CD8-positive, alpha-beta T cell (primary cell): ENCODE measurements at regions of chr19 and their contacts with region 1.

Region 1: DNA sequence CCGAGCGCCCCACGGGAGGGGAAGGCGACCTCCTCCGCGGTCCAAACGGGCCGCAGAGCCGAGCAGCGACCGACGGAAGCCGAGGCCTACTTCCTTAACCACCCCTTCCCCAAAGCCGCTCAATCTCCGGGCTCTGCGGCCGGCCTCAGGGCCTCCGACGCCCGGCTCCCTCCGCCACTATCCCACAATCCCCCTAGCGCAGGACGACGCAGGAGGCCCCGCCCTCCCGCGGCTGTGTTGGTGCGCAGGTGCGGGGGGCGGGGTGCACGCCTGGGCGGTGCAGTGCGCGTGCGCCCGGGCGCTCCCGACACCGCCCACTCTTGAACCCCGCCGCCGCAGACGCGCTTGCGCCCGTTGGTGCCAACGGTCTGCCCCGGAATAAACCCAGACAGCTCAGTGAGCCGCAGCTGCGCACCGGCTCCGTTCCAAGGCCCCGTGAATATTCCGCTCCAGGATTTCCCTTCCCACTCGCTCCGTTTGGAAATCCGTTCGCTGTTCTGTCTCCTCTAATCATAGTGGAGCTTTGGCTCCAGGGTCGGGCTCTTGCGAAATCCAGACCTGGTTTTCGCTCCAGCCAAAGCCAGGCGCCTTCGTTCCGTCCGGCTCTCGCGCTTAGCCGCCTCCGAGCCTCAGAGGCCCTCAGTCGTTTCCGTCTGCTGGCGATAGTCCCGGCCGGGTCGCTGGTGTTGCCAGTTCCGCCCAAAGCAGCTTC is at the start of gene PPP6R1:
- DNase-seq: peak; percentile 86 to 98 (median 92)
- ATAC-seq: peak; percentile 81
- H3K4me3 ChIP-seq: peak within 1 kb of the TSS; percentile 80 to 93
- H3K4me3 Mint-ChIP-seq: peak within 1 kb of the TSS; percentile 94
- H3K27ac ChIP-seq: peak within 1 kb of the TSS; percentile 87 to 95
- H3K27ac Mint-ChIP-seq: peak within 1 kb of the TSS; percentile 98
- H3K4me1 ChIP-seq: peaks cover 37% of the 10 kb centered on the region
- H3K4me1 Mint-ChIP-seq: peaks cover 39% of the 10 kb centered on the region
- H3K27me3 ChIP-seq: no peaks in the 10 kb centered on the region
- H3K27me3 Mint-ChIP-seq: no peaks in the 10 kb centered on the region
- CTCF ChIP-seq: no peak
- total RNA-seq, gene PPP6R1: 163 to 172 TPM

Region 2: GRCh38 chr19:55117636-55118391 is 141.2 kb before region 1 on chr19 and contains the start of gene PPP1R12C:
- CTCF ChIA-PET with region 1: interaction called, 3 read pairs
- POLR2A ChIA-PET with region 1: interaction called, 8 read pairs
- intact Hi-C with region 1: loop called (anchors 2 to 10 kb)
- DNase-seq: peak; percentile 89 to 99 (median 97)
- ATAC-seq: peak; percentile 89
- H3K4me3 ChIP-seq: peak within 1 kb of the TSS; percentile 83 to 89
- H3K4me3 Mint-ChIP-seq: peak within 1 kb of the TSS; percentile 97
- H3K27ac ChIP-seq: peak within 1 kb of the TSS; percentile 61 to 84
- H3K27ac Mint-ChIP-seq: peak within 1 kb of the TSS; percentile 93
- H3K4me1 ChIP-seq: peaks cover 19% of the 10 kb centered on the region
- H3K4me1 Mint-ChIP-seq: peaks cover 34% of the 10 kb centered on the region
- H3K27me3 ChIP-seq: no peaks in the 10 kb centered on the region
- H3K27me3 Mint-ChIP-seq: no peaks in the 10 kb centered on the region
- CTCF ChIP-seq: no peak
- total RNA-seq, gene PPP1R12C: 93.8 to 97.6 TPM

Region 3: GRCh38 chr19:55241143-55242088 is 17.6 kb before region 1 on chr19:
- CTCF ChIA-PET with region 1: interaction called, 3 read pairs
- POLR2A ChIA-PET with region 1: interaction called, 5 read pairs
- intact Hi-C with region 1: loop called in 1 of 2 experiments (anchors 1 kb)
- DNase-seq: no peak
- ATAC-seq: no peak
- H3K4me3 ChIP-seq: no peak overlapping the region
- H3K4me3 Mint-ChIP-seq: no peak overlapping the region
- H3K27ac ChIP-seq: no peak overlapping the region
- H3K27ac Mint-ChIP-seq: no peak overlapping the region
- H3K4me1 ChIP-seq: no peaks in the 10 kb centered on the region
- H3K4me1 Mint-ChIP-seq: peaks cover 4% of the 10 kb centered on the region
- H3K27me3 ChIP-seq: no peaks in the 10 kb centered on the region
- H3K27me3 Mint-ChIP-seq: no peaks in the 10 kb centered on the region
- CTCF ChIP-seq: no peak

Region 4: DNA sequence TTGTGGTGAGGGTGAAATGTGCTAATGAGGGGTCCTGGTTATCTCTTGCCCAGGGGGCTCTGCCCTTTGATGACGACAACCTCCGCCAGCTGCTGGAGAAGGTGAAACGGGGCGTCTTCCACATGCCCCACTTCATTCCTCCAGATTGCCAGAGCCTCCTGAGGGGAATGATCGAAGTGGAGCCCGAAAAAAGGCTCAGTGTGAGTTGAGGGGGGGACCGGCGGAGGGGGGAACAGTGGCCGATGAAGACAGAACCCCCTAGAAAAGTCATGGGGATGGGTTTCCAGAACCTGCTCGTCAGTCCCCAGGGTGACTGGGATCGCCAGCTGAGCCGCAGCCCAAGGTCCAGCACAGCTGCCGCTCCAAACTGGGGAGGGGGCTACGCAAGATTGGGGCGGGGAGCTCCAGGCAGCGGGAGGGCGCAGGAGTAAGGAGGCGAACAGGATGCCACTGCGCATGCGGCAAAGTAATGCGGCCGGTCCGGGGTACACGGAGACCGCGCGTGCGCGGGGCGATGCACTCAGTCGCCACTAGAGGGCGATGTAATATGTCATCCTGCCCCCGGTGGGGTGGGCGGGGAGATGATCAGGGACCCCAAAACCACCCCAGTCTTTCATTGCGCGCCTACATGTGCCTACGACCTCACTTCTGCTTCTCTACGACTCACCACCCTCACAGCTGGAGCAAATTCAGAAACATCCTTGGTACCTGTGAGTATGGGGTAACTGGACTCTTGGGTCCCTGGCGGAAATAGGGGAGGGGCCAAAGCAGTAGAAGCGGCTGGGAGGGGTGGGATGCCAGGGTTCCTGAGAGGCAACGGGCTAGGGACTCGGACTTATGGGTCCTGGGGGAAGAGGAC is 42.7 kb after region 1 on chr19:
- CTCF ChIA-PET with region 1: interaction called, 18 read pairs
- POLR2A ChIA-PET with region 1: interaction called, 11 read pairs
- intact Hi-C with region 1: loop called in 1 of 2 experiments (anchors 1 kb)
- DNase-seq: peak; percentile 89 to 99 (median 94)
- ATAC-seq: peak; percentile 88
- H3K4me3 ChIP-seq: peak overlapping the region; percentile 46 to 83
- H3K4me3 Mint-ChIP-seq: peak overlapping the region; percentile 85
- H3K27ac ChIP-seq: peak overlapping the region; percentile 48 to 54
- H3K27ac Mint-ChIP-seq: peak overlapping the region; percentile 92
- H3K4me1 ChIP-seq: peaks cover 11% of the 10 kb centered on the region
- H3K4me1 Mint-ChIP-seq: peaks cover 12% of the 10 kb centered on the region
- H3K27me3 ChIP-seq: no peaks in the 10 kb centered on the region
- H3K27me3 Mint-ChIP-seq: no peaks in the 10 kb centered on the region
- CTCF ChIP-seq: peak; percentile 89

Region 5: GRCh38 chr19:55407800-55408532 is 149.0 kb after region 1 on chr19:
- CTCF ChIA-PET with region 1: no interaction called
- POLR2A ChIA-PET with region 1: interaction called, 13 read pairs
- intact Hi-C with region 1: loop called (anchors 2 kb)
- DNase-seq: peak; percentile 94 to 100 (median 96)
- ATAC-seq: peak; percentile 88
- H3K4me3 ChIP-seq: peak overlapping the region; percentile 64 to 70
- H3K4me3 Mint-ChIP-seq: peak overlapping the region; percentile 95
- H3K27ac ChIP-seq: peak overlapping the region; percentile 98 to 99
- H3K27ac Mint-ChIP-seq: peak overlapping the region; percentile 99
- H3K4me1 ChIP-seq: peaks cover 21% of the 10 kb centered on the region
- H3K4me1 Mint-ChIP-seq: peaks cover 27% of the 10 kb centered on the region
- H3K27me3 ChIP-seq: no peaks in the 10 kb centered on the region
- H3K27me3 Mint-ChIP-seq: no peaks in the 10 kb centered on the region
- CTCF ChIP-seq: no peak

Region 6: GRCh38 chr19:55599468-55600279 is 340.7 kb after region 1 on chr19 and contains the start of gene FIZ1:
- CTCF ChIA-PET with region 1: no interaction called
- POLR2A ChIA-PET with region 1: interaction called, 3 read pairs
- intact Hi-C with region 1: loop called (anchors 2 kb)
- DNase-seq: peak; percentile 90 to 98 (median 95)
- ATAC-seq: peak; percentile 69
- H3K4me3 ChIP-seq: peak within 1 kb of the TSS; percentile 80 to 81
- H3K4me3 Mint-ChIP-seq: peak within 1 kb of the TSS; percentile 100
- H3K27ac ChIP-seq: peak within 1 kb of the TSS; percentile 75 to 95
- H3K27ac Mint-ChIP-seq: peak within 1 kb of the TSS; percentile 99
- H3K4me1 ChIP-seq: peaks cover 14% of the 10 kb centered on the region
- H3K4me1 Mint-ChIP-seq: peaks cover 29% of the 10 kb centered on the region
- H3K27me3 ChIP-seq: no peaks in the 10 kb centered on the region
- H3K27me3 Mint-ChIP-seq: no peaks in the 10 kb centered on the region
- CTCF ChIP-seq: no peak
- total RNA-seq, gene FIZ1: 6.7 to 8.4 TPM

Region 7: GRCh38 chr19:55624109-55625003 is 365.4 kb after region 1 on chr19 and contains the start of gene ZNF784:
- CTCF ChIA-PET with region 1: no interaction called
- POLR2A ChIA-PET with region 1: no interaction called
- intact Hi-C with region 1: no loop called
- DNase-seq: peak; percentile 87 to 97 (median 93)
- ATAC-seq: peak; percentile 76
- H3K4me3 ChIP-seq: peak within 1 kb of the TSS; percentile 67 to 88
- H3K4me3 Mint-ChIP-seq: peak within 1 kb of the TSS; percentile 91
- H3K27ac ChIP-seq: peak within 1 kb of the TSS; percentile 72 to 92
- H3K27ac Mint-ChIP-seq: peak within 1 kb of the TSS; percentile 98
- H3K4me1 ChIP-seq: peaks cover 50% of the 10 kb centered on the region
- H3K4me1 Mint-ChIP-seq: peaks cover 56% of the 10 kb centered on the region
- H3K27me3 ChIP-seq: no peaks in the 10 kb centered on the region
- H3K27me3 Mint-ChIP-seq: no peaks in the 10 kb centered on the region
- CTCF ChIP-seq: no peak
- total RNA-seq, gene ZNF784: 11.7 to 12.2 TPM

Region 8: DNA sequence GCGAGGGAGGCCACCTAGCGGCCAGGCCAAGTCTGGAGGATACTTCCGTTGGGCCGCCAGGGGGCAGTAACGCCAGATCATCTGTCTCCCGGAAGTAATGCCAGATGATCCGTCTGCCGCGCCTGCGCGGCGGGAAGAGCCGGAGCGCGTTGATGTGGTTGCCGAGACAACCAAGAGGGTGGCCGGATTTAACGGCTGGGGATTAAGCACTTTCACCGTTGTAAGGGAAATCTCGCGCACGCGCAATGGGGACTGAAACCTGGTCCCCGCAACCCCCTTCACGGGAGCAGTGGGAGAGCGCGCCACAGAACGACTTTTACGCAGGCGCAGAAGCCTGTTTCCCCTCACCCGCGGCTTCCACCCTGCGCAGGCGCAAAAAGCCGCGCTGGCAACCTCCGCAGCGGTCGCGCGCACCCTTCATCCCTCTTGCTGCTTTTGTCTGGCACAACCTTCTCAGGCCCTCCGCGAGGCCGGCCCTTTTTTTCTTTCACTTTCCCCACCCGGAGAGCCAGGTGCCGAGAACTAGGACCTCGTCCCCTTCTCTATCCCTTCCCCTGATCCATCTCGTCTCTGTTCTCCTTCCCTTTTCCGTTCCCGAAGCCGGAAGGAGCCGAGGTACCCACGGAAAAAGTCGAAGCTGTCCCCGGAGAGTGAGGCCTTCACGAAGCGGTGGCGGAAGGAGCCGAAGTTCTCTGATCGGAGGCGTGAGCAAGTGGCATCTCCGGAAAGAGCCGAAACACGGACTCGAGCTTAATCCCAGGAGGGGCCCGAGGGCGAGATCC is 395.0 kb after region 1 on chr19:
- CTCF ChIA-PET with region 1: interaction called, 3 read pairs
- POLR2A ChIA-PET with region 1: interaction called, 4 read pairs
- intact Hi-C with region 1: loop called in 1 of 2 experiments (anchors 5 kb)
- DNase-seq: peak; percentile 98 to 100 (median 99)
- ATAC-seq: peak; percentile 77
- H3K4me3 ChIP-seq: peak overlapping the region; percentile 72 to 89
- H3K4me3 Mint-ChIP-seq: peak overlapping the region; percentile 95
- H3K27ac ChIP-seq: peak overlapping the region; percentile 79 to 100
- H3K27ac Mint-ChIP-seq: peak overlapping the region; percentile 97
- H3K4me1 ChIP-seq: peaks cover 38% of the 10 kb centered on the region
- H3K4me1 Mint-ChIP-seq: peaks cover 44% of the 10 kb centered on the region
- H3K27me3 ChIP-seq: peaks cover 0 to 5% of the 10 kb centered on the region in 2 experiments
- H3K27me3 Mint-ChIP-seq: no peaks in the 10 kb centered on the region
- CTCF ChIP-seq: peak; percentile 100